CD4-positive, alpha-beta T cell (primary cell): ENCODE measurements at regions of chr1 and their contacts with region 1.

Region 1: DNA sequence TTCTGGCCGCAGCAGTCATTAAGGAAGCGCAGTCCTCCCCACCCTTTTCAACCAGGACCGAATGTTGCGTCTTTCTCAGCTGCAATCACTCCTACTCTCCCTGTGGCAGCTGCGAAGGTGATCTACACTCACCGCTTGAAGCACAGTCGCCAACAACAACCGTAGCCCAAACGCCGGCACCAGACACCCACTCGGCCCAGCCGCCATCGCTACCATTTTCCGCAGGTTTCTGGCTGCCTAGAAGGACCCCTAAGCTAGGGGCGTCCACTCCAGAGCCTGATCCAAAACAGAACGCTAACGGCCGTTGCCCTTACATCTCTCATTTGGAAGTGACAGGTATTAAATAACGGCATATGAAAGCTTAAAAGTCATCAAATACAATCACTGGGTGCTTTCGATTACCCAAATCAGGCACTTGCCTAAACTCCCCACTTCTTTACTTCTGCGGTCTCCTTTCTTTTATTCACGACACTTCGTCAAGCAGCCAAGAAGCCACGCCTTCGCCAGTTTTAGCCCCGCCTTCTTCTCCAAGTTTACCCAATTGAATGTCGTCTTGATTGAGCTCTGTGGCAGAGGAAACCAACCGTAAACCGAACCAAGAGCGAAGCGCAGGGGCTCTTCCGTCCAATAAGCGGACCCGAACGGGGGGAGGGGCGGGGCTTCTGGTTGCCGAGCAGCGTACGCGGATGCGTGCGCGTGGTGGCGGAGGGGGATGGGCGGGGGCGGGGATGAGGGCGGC is at the start of gene SELENOF:
- DNase-seq: peak; percentile 98 to 100 (median 99)
- ATAC-seq: peak; percentile 88
- H3K4me3 ChIP-seq: peak within 1 kb of the TSS; percentile 90
- H3K4me3 Mint-ChIP-seq: no peak within 1 kb of the TSS
- H3K27ac ChIP-seq: peak within 1 kb of the TSS; percentile 95 to 96
- H3K27ac Mint-ChIP-seq: no peak within 1 kb of the TSS
- H3K4me1 ChIP-seq: peaks cover 25% of the 10 kb centered on the region
- H3K4me1 Mint-ChIP-seq: peaks cover 53% of the 10 kb centered on the region
- H3K27me3 ChIP-seq: no peaks in the 10 kb centered on the region
- H3K27me3 Mint-ChIP-seq: no peaks in the 10 kb centered on the region
- CTCF ChIP-seq: no peak
- total RNA-seq, gene SELENOF: 74.1 to 74.9 TPM

Region 2: GRCh38 chr1:86389307-86389706 is 524.8 kb before region 1 on chr1:
- CTCF ChIA-PET with region 1: no interaction called
- POLR2A ChIA-PET with region 1: interaction called, 3 read pairs
- intact Hi-C with region 1: loop called (anchors 5 to 10 kb)
- DNase-seq: peak in 3 of 14 experiments; percentile 50 to 70 (median 54)
- ATAC-seq: peak; percentile 80
- H3K4me3 ChIP-seq: peak overlapping the region; percentile 37
- H3K4me3 Mint-ChIP-seq: peak overlapping the region; percentile 77
- H3K27ac ChIP-seq: peak overlapping the region; percentile 8 to 73
- H3K27ac Mint-ChIP-seq: peak overlapping the region; percentile 78
- H3K4me1 ChIP-seq: peaks cover 4% of the 10 kb centered on the region
- H3K4me1 Mint-ChIP-seq: peaks cover 68% of the 10 kb centered on the region
- H3K27me3 ChIP-seq: no peaks in the 10 kb centered on the region
- H3K27me3 Mint-ChIP-seq: no peaks in the 10 kb centered on the region
- CTCF ChIP-seq: no peak

Region 3: DNA sequence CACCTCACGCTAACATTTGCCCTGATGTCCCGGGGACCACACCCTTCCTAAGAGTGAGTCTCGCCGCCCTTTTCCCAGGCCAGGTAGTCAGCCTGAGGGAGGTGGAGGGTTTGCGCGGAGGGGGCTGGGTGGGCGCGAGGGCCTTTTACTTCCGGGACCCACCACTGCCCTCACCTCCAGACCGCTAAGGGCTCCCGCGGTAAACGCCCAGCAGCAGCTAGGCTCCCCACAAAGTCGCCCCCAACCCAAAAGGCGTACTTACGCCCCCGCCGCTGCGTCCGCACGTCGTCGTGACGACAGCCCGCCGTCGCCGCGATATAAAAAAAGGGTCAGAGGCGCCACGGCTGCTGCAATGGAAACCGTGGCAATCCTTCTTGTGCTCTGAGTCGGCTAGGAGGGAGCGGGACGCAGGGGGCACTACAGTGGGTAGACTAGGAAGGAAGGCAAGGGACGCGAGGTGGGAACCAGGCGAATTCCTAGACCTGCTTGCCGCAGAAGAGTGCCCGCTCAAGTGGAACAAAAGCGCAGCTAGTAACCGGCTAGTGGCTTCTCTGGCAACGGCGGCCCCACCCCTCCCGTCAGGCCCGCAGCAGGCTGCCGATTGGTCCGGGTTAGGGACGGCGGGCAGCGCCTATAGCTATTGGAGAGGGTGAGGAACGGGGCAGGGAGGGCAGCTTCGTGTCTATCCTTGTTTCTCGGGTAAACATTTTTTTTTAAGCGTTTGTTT is 518.1 kb before region 1 on chr1 and contains the start of gene ODF2L:
- CTCF ChIA-PET with region 1: no interaction called
- POLR2A ChIA-PET with region 1: interaction called, 24 read pairs
- intact Hi-C with region 1: loop called in 1 of 2 experiments (anchors 10 kb)
- DNase-seq: peak; percentile 77 to 95 (median 84)
- ATAC-seq: peak; percentile 97
- H3K4me3 ChIP-seq: peak within 1 kb of the TSS; percentile 67
- H3K4me3 Mint-ChIP-seq: peak within 1 kb of the TSS; percentile 93
- H3K27ac ChIP-seq: peak within 1 kb of the TSS; percentile 75 to 89
- H3K27ac Mint-ChIP-seq: peak within 1 kb of the TSS; percentile 96
- H3K4me1 ChIP-seq: peaks cover 19% of the 10 kb centered on the region
- H3K4me1 Mint-ChIP-seq: peaks cover 69% of the 10 kb centered on the region
- H3K27me3 ChIP-seq: no peaks in the 10 kb centered on the region
- H3K27me3 Mint-ChIP-seq: no peaks in the 10 kb centered on the region
- CTCF ChIP-seq: no peak
- total RNA-seq, gene ODF2L: 68.1 to 71.2 TPM

Region 4: DNA sequence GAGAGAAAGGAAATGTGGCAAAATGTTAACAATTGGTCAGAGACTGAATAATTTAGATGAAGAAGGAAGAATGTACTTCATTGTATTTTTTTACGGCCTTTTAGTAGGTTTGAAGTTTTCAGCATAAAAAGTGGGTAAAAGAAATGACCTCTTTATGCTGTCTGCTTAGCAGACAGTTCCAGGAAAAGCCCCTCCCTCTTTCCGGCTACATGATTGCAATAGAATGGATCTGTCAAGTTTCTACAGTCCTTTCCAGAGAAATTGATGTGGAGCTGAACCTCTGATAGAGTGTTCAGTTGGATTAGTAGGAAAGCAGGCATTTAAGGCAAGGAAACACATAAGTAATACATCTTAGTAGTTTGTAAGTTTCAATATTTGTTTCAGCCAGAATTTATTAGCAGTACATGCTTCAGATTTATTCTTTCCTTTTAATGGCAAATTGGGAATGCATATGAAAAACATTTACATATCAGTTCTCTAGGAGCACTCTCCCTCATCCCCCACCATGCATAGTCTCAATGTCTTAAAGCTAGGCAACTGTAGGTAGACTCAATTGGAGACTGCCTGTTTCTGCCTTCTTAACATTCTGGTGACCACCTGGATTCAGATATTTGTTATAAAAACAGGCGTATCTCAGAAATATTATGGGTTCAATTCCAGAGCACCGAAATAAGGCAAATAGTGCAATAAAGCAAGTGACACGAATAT is 36.8 kb after region 1 on chr1:
- CTCF ChIA-PET with region 1: no interaction called
- POLR2A ChIA-PET with region 1: no interaction called
- intact Hi-C with region 1: no loop called
- DNase-seq: no peak
- ATAC-seq: no peak
- H3K4me3 ChIP-seq: no peak overlapping the region
- H3K4me3 Mint-ChIP-seq: no peak overlapping the region
- H3K27ac ChIP-seq: no peak overlapping the region
- H3K27ac Mint-ChIP-seq: no peak overlapping the region
- H3K4me1 ChIP-seq: no peaks in the 10 kb centered on the region
- H3K4me1 Mint-ChIP-seq: peaks cover 25% of the 10 kb centered on the region
- H3K27me3 ChIP-seq: no peaks in the 10 kb centered on the region
- H3K27me3 Mint-ChIP-seq: no peaks in the 10 kb centered on the region
- CTCF ChIP-seq: no peak

Region 5: DNA sequence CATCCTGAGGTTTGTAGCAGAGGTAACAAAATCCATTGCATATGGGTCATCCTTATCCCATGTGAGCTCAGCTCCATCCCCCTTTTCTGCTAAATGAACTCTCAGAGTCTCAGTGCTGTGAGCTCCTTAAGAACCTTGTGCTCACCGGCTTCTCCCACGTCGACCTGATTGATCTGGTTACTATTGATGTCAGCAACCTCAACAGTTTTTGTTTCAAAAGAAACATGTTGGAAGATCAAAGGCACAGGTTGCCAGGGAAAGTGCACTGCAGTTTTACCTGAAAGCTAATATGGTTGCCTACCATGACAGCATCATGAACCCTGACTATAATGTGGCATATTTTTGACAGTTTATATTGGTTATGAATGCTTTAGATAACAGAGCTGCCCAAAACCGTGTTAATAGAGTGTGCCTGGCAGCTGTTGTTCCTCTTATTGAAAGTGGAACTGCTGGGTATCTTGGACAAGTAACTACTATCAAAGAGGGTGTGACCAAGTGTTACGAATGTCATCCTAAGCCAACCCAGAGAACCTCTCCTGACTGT is 131.8 kb after region 1 on chr1:
- CTCF ChIA-PET with region 1: no interaction called
- POLR2A ChIA-PET with region 1: interaction called, 7 read pairs
- intact Hi-C with region 1: loop called in 1 of 2 experiments (anchors 2 kb)
- DNase-seq: peak in 12 of 14 experiments; percentile 5 to 86 (median 32)
- ATAC-seq: peak; percentile 69
- H3K4me3 ChIP-seq: no peak overlapping the region
- H3K4me3 Mint-ChIP-seq: peak overlapping the region; percentile 67
- H3K27ac ChIP-seq: peak overlapping the region in 1 of 2 donors; percentile 15
- H3K27ac Mint-ChIP-seq: peak overlapping the region; percentile 73
- H3K4me1 ChIP-seq: peaks cover 13% of the 10 kb centered on the region
- H3K4me1 Mint-ChIP-seq: peaks cover 50% of the 10 kb centered on the region
- H3K27me3 ChIP-seq: no peaks in the 10 kb centered on the region
- H3K27me3 Mint-ChIP-seq: no peaks in the 10 kb centered on the region
- CTCF ChIP-seq: no peak

Region 6: GRCh38 chr1:87208931-87209330 is 294.9 kb after region 1 on chr1:
- CTCF ChIA-PET with region 1: no interaction called
- POLR2A ChIA-PET with region 1: no interaction called
- intact Hi-C with region 1: no loop called
- DNase-seq: no peak
- ATAC-seq: no peak
- H3K4me3 ChIP-seq: no peak overlapping the region
- H3K4me3 Mint-ChIP-seq: no peak overlapping the region
- H3K27ac ChIP-seq: no peak overlapping the region
- H3K27ac Mint-ChIP-seq: no peak overlapping the region
- H3K4me1 ChIP-seq: no peaks in the 10 kb centered on the region
- H3K4me1 Mint-ChIP-seq: no peaks in the 10 kb centered on the region
- H3K27me3 ChIP-seq: peaks cover 0 to 6% of the 10 kb centered on the region in 2 experiments
- H3K27me3 Mint-ChIP-seq: peaks cover 3% of the 10 kb centered on the region
- CTCF ChIP-seq: no peak

Region 7: GRCh38 chr1:87335175-87335884 is 421.3 kb after region 1 on chr1:
- CTCF ChIA-PET with region 1: no interaction called
- POLR2A ChIA-PET with region 1: interaction called, 13 read pairs
- intact Hi-C with region 1: loop called (anchors 5 to 10 kb)
- DNase-seq: peak; percentile 25 to 80 (median 44)
- ATAC-seq: peak; percentile 51
- H3K4me3 ChIP-seq: peak overlapping the region; percentile 55
- H3K4me3 Mint-ChIP-seq: peak overlapping the region; percentile 92
- H3K27ac ChIP-seq: no peak overlapping the region
- H3K27ac Mint-ChIP-seq: peak overlapping the region; percentile 66
- H3K4me1 ChIP-seq: peaks cover 33% of the 10 kb centered on the region
- H3K4me1 Mint-ChIP-seq: peaks cover 52% of the 10 kb centered on the region
- H3K27me3 ChIP-seq: peaks cover 0 to 12% of the 10 kb centered on the region in 2 experiments
- H3K27me3 Mint-ChIP-seq: peaks cover 26% of the 10 kb centered on the region
- CTCF ChIP-seq: no peak

Region 8: DNA sequence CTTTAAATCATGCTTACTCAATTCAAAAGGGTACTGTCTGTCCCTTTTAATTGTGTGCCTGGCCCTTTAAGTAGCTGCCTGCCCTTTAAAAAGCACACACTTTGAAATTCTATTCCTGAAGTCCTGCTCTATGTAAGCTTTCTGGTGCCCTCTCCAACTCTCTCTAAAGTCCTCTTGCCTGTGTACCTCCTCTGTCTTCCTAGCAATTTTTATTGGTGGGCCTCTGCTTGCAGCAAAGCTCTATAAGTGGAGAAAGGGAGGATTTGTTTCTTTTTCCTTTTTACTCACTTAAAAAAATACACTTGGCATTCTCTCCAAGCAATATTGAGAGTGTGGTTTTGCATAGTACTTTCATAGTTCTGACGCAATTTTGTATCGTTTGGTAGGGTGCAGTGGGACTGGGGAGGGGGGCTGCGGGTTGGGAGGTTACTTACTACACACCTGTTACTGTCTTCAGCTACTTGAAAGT is 550.0 kb after region 1 on chr1:
- CTCF ChIA-PET with region 1: no interaction called
- POLR2A ChIA-PET with region 1: no interaction called
- intact Hi-C with region 1: no loop called
- DNase-seq: no peak
- ATAC-seq: no peak
- H3K4me3 ChIP-seq: no peak overlapping the region
- H3K4me3 Mint-ChIP-seq: no peak overlapping the region
- H3K27ac ChIP-seq: no peak overlapping the region
- H3K27ac Mint-ChIP-seq: no peak overlapping the region
- H3K4me1 ChIP-seq: no peaks in the 10 kb centered on the region
- H3K4me1 Mint-ChIP-seq: no peaks in the 10 kb centered on the region
- H3K27me3 ChIP-seq: no peaks in the 10 kb centered on the region
- H3K27me3 Mint-ChIP-seq: peaks cover 7% of the 10 kb centered on the region
- CTCF ChIP-seq: no peak